T-cell (primary cell): ENCODE measurements at regions of chr2 and their contacts with region 1.

Region 1: DNA sequence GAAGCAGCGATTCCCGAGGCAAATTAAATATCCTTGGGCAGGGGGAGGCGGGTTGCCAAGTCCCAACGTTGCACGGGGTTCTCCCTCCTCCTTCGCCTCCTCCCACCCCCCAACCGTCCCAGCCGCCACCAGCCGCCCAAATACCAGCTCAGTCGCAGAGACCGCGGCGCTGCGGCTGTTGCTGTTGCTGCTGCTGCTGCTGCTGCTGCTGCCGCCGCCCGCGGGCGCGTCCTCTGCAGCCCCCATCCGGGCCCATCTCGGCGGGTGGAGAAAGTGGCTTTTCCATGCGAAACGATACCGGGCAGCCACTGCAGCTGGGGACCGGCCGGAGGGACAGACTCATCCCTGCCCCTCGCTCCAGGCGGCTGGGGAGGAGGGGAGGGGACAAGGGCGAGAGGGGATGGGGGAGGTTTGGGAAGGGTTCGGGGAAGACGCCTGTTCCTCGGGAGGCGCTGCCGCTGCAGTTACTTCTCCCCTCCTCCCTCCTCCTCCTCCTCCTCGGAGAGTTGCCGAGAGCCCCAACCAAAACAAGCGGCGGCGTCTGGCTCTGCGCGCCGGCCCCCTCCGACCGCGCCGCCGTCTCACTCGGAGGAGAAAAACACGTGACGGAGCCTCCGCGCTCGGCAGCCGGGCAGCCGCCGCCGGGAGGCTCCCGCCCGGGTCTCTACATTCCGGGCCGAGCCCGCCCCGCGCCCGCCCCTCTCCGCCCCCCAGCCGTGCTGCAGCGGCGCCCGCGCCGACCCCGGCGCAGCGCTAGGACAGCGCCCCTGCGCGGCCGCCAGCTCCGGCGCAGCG is at the start of gene IRS1:
- DNase-seq: peak in 32 of 35 experiments; percentile 25 to 78 (median 48)
- ATAC-seq: peak; percentile 62 to 72 (median 65)
- H3K4me3 ChIP-seq: peak within 1 kb of the TSS; percentile 76 to 90
- H3K4me3 Mint-ChIP-seq: peak within 1 kb of the TSS; percentile 86 to 90 (median 89)
- H3K27ac ChIP-seq: peak within 1 kb of the TSS; percentile 2
- H3K27ac Mint-ChIP-seq: peak within 1 kb of the TSS; percentile 80 to 87
- H3K4me1 ChIP-seq: peaks cover 9 to 34% of the 10 kb centered on the region in 2 experiments
- H3K4me1 Mint-ChIP-seq: peaks cover 33 to 49% (median 39%) of the 10 kb centered on the region in 3 donors
- H3K27me3 ChIP-seq: peaks cover 0 to 24% of the 10 kb centered on the region in 2 experiments
- H3K27me3 Mint-ChIP-seq: peaks cover 1 to 6% of the 10 kb centered on the region in 2 donors
- total RNA-seq, gene IRS1: 3.7 to 8.7 (median 6.7) TPM

Region 2: DNA sequence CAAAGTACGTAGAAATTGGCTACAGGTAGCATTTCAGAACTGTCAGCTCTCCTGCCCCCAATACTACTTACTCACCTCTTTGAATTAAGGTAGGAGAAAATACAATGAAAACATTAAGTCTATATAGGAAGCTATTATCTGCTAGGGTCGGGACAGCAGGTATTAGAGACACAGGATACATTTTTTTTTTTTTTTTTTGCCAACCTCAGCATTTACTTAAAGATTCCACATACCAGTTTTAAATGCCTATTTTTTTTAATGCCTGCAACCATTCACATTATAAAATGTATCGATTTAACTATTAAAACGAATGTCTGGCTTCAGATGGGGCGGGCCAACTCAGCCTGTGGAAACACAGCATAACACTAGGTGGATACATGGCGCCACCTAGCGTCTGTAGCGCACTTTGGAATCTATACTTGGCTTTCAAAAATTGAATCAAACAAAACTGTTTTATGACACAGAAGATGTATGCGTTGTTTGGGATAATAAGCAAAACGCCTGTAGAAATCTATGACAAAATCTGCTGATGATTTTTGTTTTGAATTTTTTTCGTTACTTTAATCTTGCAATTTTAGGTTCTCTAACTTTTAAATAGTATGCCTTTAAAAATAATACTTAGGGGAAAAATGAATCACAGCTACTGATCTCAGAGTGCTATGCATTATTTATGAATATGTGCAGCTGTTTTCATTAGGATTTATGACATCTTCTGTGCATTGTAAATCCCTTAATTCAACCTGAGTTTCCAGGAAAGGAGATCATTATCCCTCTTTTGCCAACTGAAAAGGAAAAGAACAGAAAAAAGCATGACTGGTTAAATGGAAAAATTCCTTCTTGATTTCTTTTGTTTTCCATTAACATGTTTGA is 1138.9 kb before region 1 on chr2:
- CTCF ChIA-PET with region 1: interaction called, 5 to 15 read pairs
- POLR2A ChIA-PET with region 1: no interaction called
- DNase-seq: peak; percentile 15 to 82 (median 59)
- ATAC-seq: peak; percentile 50 to 74 (median 62)
- H3K4me3 ChIP-seq: no peak overlapping the region
- H3K4me3 Mint-ChIP-seq: no peak overlapping the region
- H3K27ac ChIP-seq: no peak overlapping the region
- H3K27ac Mint-ChIP-seq: no peak overlapping the region
- H3K4me1 ChIP-seq: no peaks in the 10 kb centered on the region
- H3K4me1 Mint-ChIP-seq: no peaks in the 10 kb centered on the region
- H3K27me3 ChIP-seq: peaks cover 0 to 2% of the 10 kb centered on the region in 2 experiments
- H3K27me3 Mint-ChIP-seq: peaks cover 22 to 25% of the 10 kb centered on the region in 2 donors

Region 3: GRCh38 chr2:225889446-225889850 is 909.9 kb before region 1 on chr2:
- CTCF ChIA-PET with region 1: interaction called, 9 to 17 read pairs
- POLR2A ChIA-PET with region 1: no interaction called
- DNase-seq: peak in 1 of 35 experiments; percentile 32
- ATAC-seq: no peak
- H3K4me3 ChIP-seq: no peak overlapping the region
- H3K4me3 Mint-ChIP-seq: no peak overlapping the region
- H3K27ac ChIP-seq: no peak overlapping the region
- H3K27ac Mint-ChIP-seq: no peak overlapping the region
- H3K4me1 ChIP-seq: no peaks in the 10 kb centered on the region
- H3K4me1 Mint-ChIP-seq: no peaks in the 10 kb centered on the region
- H3K27me3 ChIP-seq: peaks cover 0 to 3% of the 10 kb centered on the region in 2 experiments
- H3K27me3 Mint-ChIP-seq: peaks cover 6 to 11% of the 10 kb centered on the region in 2 donors

Region 4: DNA sequence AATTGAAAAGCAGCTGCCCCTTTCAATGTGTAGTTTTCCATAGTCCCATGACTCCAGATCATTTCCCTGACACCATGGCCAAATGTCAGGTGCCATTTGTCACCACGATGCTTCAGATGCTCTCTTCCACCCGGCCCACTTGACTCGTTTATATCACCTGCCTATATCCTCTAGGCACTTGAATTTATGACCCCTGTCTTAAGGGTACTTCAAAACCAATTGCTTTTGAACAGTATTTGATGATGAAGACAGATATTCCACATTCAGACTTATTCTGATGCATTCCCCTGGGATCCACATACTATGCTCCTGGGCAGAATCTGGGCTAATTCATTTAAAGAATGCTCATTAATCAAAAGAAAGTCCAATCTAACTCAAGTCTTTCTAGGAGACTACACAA is 19.6 kb after region 1 on chr2:
- CTCF ChIA-PET with region 1: interaction called, 4 to 13 read pairs
- POLR2A ChIA-PET with region 1: interaction called in 1 of 2 experiments, 8 read pairs
- DNase-seq: no peak
- ATAC-seq: no peak
- H3K4me3 ChIP-seq: no peak overlapping the region
- H3K4me3 Mint-ChIP-seq: no peak overlapping the region
- H3K27ac ChIP-seq: no peak overlapping the region
- H3K27ac Mint-ChIP-seq: no peak overlapping the region
- H3K4me1 ChIP-seq: no peaks in the 10 kb centered on the region
- H3K4me1 Mint-ChIP-seq: no peaks in the 10 kb centered on the region
- H3K27me3 ChIP-seq: peaks cover 2 to 3% of the 10 kb centered on the region in 2 experiments
- H3K27me3 Mint-ChIP-seq: peaks cover 4 to 15% of the 10 kb centered on the region in 2 donors

Region 5: DNA sequence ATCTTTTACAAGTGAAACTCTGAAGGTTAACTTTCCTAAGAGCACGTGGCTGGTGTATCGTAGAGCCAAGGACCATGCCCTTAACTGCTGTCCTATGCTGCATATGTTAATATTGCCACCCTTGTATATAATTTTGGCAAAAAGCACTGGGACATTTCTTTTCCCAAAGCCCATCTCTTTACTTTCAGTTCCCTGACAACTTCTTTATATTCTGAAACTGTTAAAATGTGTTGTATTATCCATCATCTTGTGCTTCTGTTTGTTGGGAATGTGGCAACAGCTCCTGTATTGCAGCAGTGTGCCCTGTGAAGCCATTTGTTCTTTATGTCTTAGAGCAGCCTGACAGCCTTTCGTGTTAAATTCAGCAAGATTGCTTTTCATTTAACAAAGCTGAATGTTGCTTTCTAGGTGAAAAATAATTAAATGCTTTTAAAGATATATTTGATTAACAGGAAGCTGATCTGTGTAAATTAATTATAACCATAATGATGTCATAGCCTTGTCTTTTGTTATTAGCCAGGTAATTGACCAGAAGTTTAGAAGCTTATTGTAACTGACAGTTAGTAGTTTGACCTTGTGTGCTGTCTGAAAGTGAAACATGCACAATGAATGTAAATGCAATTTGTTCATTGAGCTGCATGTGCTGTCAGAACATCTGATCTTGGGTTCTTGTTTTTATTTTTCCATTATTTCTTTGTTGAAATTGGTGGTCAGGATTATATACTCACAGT is 46.2 kb after region 1 on chr2:
- CTCF ChIA-PET with region 1: interaction called, 8 to 12 read pairs
- POLR2A ChIA-PET with region 1: interaction called in 1 of 2 experiments, 12 read pairs
- DNase-seq: no peak
- ATAC-seq: no peak
- H3K4me3 ChIP-seq: no peak overlapping the region
- H3K4me3 Mint-ChIP-seq: no peak overlapping the region
- H3K27ac ChIP-seq: no peak overlapping the region
- H3K27ac Mint-ChIP-seq: no peak overlapping the region
- H3K4me1 ChIP-seq: peaks cover 0 to 4% of the 10 kb centered on the region in 2 experiments
- H3K4me1 Mint-ChIP-seq: peaks cover 43 to 51% (median 46%) of the 10 kb centered on the region in 3 donors
- H3K27me3 ChIP-seq: no peaks in the 10 kb centered on the region
- H3K27me3 Mint-ChIP-seq: no peaks in the 10 kb centered on the region